ENCODE measurements at regions of chr13 and their contacts with region 1.

Region 1: GRCh38 chr13:31213651-31214289 is 14.0 kb downstream of the B3GLCT start:
- H3K4me3 ChIP-seq: no peak overlapping the region
- H3K27ac ChIP-seq: no peak overlapping the region
- H3K4me1 ChIP-seq: peaks cover 2% of the 10 kb centered on the region
- CTCF ChIP-seq: no peak

Region 2: DNA sequence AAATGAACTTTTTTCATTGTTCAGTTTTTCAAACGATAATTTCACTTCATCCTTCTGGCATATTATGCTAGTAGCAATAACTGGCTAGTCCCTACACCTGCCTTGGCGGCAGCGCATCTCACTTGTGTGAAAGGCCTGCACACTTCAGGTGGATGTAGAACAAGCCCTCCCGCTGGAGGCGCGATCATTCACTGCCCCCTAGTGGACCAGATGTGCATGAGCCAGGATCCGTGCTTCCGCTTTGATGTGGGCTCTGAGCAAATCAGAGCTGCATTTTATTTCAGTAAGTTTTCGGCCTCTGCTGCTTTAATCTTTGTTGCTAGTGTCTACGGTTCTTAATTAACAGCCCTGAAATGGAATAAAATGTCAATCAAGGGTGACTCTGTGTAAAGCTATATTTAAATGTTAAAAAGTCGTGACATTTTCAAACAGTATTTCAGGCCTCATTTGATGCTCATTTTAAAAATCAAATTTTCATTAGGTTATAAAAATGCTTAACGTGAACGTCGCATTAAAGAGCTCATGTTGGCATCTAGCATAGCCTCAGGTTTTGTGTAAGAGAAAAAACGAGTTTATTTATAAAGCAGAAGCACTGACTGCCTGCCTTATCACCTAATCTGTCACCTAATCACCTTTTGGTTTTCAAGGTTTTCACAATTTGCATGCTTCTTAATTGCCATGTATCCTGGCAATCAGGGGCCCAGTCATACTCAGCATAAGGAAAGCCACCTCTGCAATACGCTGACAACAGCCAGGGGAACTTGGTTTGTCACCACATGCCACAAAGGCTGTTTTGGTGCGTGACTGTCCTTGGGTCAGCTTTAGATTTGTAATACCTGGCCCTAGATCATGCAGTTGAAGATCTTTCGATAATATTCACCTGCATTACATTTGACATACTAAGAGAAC is 169.1 kb before region 1 on chr13:
- CTCF ChIA-PET with region 1: no interaction called
- POLR2A ChIA-PET with region 1: no interaction called
- H3K4me3 ChIP-seq: no peak overlapping the region
- H3K27ac ChIP-seq: no peak overlapping the region
- H3K4me1 ChIP-seq: peaks cover 6% of the 10 kb centered on the region
- CTCF ChIP-seq: peak; percentile 78

Region 3: DNA sequence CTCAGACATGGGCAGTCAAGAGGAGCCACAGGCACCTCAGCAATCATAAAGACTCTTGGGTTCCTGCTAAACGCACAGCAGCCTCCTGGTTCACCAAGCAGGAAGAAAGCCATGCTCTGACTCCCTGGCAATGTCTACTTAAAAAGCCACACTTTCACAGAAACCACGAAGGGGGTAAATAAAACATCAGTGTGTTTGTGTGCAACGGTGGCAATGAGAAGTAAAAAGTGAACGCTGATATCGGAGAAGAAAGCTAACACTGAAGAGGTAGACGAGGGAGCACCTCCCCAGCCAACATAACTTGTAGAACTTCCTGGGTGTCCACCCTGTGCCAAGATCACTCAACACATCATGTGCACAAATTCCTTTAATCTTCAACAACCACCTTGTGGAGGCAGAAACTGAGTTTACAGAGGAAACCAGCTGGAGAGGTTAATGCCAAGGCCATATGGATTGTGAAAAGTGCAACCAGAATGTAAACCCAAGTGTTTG is 82.3 kb before region 1 on chr13:
- CTCF ChIA-PET with region 1: no interaction called
- POLR2A ChIA-PET with region 1: no interaction called
- H3K4me3 ChIP-seq: no peak overlapping the region
- H3K27ac ChIP-seq: no peak overlapping the region
- H3K4me1 ChIP-seq: no peaks in the 10 kb centered on the region
- CTCF ChIP-seq: no peak

Region 4: DNA sequence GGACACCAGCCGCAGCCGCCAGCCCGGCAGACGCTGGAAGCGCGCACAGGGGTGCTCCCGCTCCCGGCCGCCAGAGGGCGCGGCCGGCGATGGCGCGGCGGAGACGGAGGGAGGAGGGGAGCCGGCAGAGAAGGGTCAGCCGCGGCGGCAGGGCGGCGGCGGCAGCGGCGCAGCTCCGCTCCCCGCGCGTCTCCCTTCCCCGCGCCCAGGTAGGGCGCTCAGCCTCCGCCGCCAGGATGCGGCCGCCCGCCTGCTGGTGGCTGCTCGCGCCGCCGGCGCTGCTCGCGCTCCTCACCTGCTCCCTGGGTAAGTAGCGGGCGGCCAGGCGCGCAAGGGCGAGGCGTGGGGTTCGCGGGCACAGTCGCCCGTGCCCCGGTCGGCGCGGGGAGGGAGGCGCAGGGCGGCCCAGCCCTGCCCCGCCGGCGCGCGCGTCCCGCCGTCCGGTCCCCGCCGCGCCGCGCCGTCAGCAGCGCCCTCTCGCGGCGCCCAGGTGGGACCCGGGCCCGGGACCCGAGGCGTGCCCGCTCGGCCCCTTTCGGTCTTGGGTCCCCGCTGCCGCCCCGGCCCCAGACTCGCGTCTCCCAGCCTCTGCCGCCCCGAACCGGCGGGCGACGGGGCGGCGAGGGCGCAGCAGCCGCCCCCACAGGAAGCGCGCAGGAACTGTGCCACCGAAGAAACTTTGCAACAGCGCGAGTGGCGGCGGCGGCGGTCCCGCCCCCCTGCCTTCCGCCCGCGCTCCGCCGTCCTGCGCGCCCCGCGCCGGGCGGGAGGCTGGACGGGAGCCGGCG is 13.7 kb before region 1 on chr13 and contains the start of gene B3GLCT:
- CTCF ChIA-PET with region 1: interaction called, 15 read pairs
- POLR2A ChIA-PET with region 1: interaction called, 6 read pairs
- H3K4me3 ChIP-seq: peak within 1 kb of the TSS; percentile 67
- H3K27ac ChIP-seq: peak within 1 kb of the TSS; percentile 97
- H3K4me1 ChIP-seq: peaks cover 6% of the 10 kb centered on the region
- CTCF ChIP-seq: no peak; the same call in 1 of the 2 replicates

Measured in HEK293 (cell line).